Activated B cell treated with CpG ODN at 0.5 μM for 24 hours (primary cell): ENCODE measurements at regions of chr14 and their contacts with region 1.

Region 1: DNA sequence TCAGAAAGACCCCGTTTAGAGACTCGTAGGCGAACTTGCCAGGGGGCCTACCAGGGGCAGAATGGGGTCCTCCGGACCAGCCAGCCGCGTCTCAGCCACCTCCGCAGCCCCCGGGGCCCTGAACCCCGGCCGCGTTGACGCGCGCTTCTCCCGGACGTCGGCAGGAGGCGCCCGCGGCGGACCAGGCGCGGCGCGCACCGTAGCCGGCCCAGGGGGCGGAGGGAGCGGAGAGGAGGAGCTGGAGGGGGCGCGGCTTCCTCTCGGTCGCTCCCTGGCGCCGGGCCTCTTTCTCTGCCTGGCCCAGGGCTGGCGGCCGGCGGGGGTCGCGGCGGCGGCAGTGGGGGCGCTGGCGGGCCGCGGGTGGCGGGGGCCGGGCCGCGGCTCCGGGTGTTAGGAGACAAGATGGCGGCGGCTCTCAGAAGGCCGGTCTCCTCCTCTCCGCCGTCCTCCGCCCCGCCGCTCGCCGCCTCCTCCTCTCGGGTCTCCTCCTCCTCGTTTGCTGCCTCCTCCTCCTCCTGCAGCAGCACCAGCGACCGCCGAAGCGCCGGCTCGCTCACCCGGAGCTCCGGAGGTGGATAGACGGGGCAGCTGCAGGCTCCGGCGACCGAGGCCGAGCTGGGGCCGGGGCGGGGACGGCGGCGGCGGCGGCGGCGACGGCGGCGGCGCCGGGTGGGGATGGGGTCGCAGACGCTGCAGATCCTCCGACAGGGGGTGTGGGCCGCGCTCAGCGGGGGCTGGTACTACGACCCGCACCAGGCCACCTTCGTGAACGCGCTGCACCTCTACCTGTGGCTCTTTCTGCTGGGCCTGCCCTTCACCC is at the start of gene PCNX1:
- DNase-seq: peak; percentile 94
- ATAC-seq: peak; percentile 79
- H3K4me3 Mint-ChIP-seq: peak within 1 kb of the TSS; percentile 85
- H3K27ac Mint-ChIP-seq: peak within 1 kb of the TSS; percentile 93
- H3K4me1 Mint-ChIP-seq: peaks cover 26% of the 10 kb centered on the region
- H3K27me3 Mint-ChIP-seq: no peaks in the 10 kb centered on the region
- CTCF ChIP-seq: no peak
- total RNA-seq, gene PCNX1: 53.6 and 64.7 TPM in 2 replicates

Region 2: GRCh38 chr14:69818757-69819191 is 1088.6 kb before region 1 on chr14:
- CTCF ChIA-PET with region 1: no interaction called
- POLR2A ChIA-PET with region 1: no interaction called
- intact Hi-C with region 1: loop called (anchors 1 kb)
- DNase-seq: peak; percentile 20
- ATAC-seq: peak; percentile 70
- H3K4me3 Mint-ChIP-seq: no peak overlapping the region
- H3K27ac Mint-ChIP-seq: no peak overlapping the region
- H3K4me1 Mint-ChIP-seq: peaks cover 4% of the 10 kb centered on the region
- H3K27me3 Mint-ChIP-seq: peaks cover 4% of the 10 kb centered on the region
- CTCF ChIP-seq: no peak

Region 3: DNA sequence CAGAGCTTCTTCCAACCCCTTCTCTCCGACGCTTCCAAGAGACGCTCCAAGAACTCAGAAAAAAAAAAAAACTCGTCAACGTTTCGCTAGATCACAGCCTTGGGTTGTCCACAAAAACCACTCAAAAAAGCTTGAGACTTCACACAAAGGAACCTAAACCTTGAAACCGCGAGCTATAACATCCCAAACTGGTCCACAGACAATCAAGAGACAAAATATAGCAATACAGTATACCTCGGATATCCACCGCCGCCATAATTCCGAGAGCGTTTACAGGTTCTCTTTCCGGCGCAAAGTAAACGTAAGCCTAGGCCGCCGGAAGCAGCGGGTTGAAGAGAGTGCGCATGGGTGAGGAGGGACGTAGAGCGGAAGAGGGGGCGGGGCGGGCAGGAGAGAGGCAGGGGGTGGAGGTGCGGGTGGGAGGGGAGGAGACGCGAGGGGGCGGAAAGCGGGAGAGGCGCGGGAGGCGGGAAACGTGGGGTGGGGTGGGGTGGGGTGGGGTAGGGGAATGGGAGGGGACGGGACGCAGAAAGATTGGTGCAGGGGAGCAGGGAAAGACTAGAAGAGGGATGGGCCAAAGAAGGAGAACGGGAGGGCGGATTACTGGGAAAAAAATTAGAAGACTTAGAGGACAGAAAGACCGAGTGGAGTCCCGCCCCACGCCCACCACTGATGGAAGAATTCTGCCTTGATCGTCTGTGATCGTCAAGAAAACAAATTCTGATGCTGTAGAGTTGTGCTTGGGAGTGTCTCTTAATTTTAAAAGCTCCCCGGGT is 306.8 kb before region 1 on chr14 and contains the start of gene MED6:
- CTCF ChIA-PET with region 1: no interaction called
- POLR2A ChIA-PET with region 1: interaction called, 3 read pairs
- intact Hi-C with region 1: loop called (anchors 1 kb)
- DNase-seq: peak; percentile 77
- ATAC-seq: peak; percentile 99
- H3K4me3 Mint-ChIP-seq: peak within 1 kb of the TSS; percentile 99
- H3K27ac Mint-ChIP-seq: peak within 1 kb of the TSS; percentile 94
- H3K4me1 Mint-ChIP-seq: peaks cover 43% of the 10 kb centered on the region
- H3K27me3 Mint-ChIP-seq: no peaks in the 10 kb centered on the region
- CTCF ChIP-seq: no peak
- total RNA-seq, gene MED6: 50.5 and 57.0 TPM in 2 replicates

Region 4: GRCh38 chr14:70809543-70810244 is 97.7 kb before region 1 on chr14:
- CTCF ChIA-PET with region 1: interaction called, 8 read pairs
- POLR2A ChIA-PET with region 1: interaction called, 13 read pairs
- intact Hi-C with region 1: loop called (anchors 1 kb)
- DNase-seq: peak; percentile 85
- ATAC-seq: peak; percentile 87
- H3K4me3 Mint-ChIP-seq: no peak overlapping the region
- H3K27ac Mint-ChIP-seq: peak overlapping the region; percentile 80
- H3K4me1 Mint-ChIP-seq: peaks cover 24% of the 10 kb centered on the region
- H3K27me3 Mint-ChIP-seq: no peaks in the 10 kb centered on the region
- CTCF ChIP-seq: no peak

Region 5: DNA sequence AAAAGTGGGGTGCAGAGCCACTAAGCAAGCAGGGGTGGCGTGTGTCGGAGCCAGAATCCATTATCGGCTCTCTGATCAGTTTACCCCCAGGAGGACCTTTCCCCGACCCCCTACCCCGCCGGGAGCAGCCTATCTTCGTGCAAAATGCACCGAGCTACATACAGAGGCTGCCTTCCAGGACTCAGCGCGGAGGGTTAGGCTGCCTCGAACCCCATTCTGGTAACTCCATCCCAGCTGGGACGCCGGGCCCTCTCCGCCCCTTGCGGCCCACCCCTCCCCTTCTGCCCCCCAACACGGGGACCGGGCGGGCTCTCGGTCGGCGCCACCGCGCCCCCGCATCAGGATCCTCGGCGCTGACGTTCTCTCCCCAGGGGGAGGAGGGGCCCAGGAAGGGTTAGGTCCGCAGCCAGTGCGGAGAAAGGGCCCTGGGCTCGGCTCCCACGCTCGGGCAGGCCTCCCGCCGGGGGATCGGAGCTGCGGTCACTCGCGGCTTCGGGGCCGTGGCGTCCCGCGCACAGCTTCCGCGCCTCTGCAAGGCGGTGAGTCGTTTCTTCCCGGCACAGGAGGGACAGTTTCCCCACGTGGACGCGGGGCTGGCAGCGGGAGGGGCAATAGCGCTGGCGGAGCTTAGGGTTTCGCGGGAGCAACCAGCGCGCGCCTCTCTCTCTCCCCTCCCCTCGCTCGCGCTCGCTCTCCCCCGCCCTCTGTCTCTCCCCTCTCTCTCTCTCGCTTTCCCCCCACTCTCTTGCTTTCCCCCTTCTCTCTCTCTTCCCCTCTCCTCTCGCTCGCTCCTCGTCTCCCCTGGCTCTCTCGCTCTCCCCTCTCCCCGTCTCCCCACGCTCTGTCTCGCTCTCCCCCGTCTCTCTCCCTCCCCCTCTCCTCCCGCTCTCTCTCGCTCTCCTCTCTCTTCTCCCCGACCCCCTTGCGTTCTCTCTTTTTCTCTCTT is 85.5 kb before region 1 on chr14:
- CTCF ChIA-PET with region 1: interaction called, 17 read pairs
- POLR2A ChIA-PET with region 1: no interaction called
- intact Hi-C with region 1: loop called (anchors 2 kb)
- DNase-seq: peak; percentile 36
- ATAC-seq: peak; percentile 25
- H3K4me3 Mint-ChIP-seq: peak overlapping the region; percentile 73
- H3K27ac Mint-ChIP-seq: no peak overlapping the region
- H3K4me1 Mint-ChIP-seq: peaks cover 19% of the 10 kb centered on the region
- H3K27me3 Mint-ChIP-seq: peaks cover 30% of the 10 kb centered on the region
- CTCF ChIP-seq: no peak

Region 6: GRCh38 chr14:70934502-70935134 is 27.2 kb after region 1 on chr14:
- CTCF ChIA-PET with region 1: interaction called, 3 read pairs
- POLR2A ChIA-PET with region 1: no interaction called
- intact Hi-C with region 1: loop called (anchors 2 kb)
- DNase-seq: no peak
- ATAC-seq: no peak
- H3K4me3 Mint-ChIP-seq: peak overlapping the region; percentile 5
- H3K27ac Mint-ChIP-seq: peak overlapping the region; percentile 57
- H3K4me1 Mint-ChIP-seq: peaks cover 48% of the 10 kb centered on the region
- H3K27me3 Mint-ChIP-seq: no peaks in the 10 kb centered on the region
- CTCF ChIP-seq: no peak

Region 7: GRCh38 chr14:70972107-70972976 is 65.0 kb after region 1 on chr14:
- CTCF ChIA-PET with region 1: interaction called, 18 read pairs
- POLR2A ChIA-PET with region 1: interaction called, 8 read pairs
- intact Hi-C with region 1: loop called (anchors 1 kb)
- DNase-seq: peak; percentile 49
- ATAC-seq: peak; percentile 62
- H3K4me3 Mint-ChIP-seq: no peak overlapping the region
- H3K27ac Mint-ChIP-seq: no peak overlapping the region
- H3K4me1 Mint-ChIP-seq: peaks cover 5% of the 10 kb centered on the region
- H3K27me3 Mint-ChIP-seq: no peaks in the 10 kb centered on the region
- CTCF ChIP-seq: peak; percentile 59